ENCODE measurements at regions of chr12 and their contacts with region 1.

Region 1: GRCh38 chr12:14995583-14996425 is 23.0 kb downstream of the PDE6H start:
- DNase-seq: no peak
- H3K4me3 Mint-ChIP-seq: no peak overlapping the region
- H3K27ac Mint-ChIP-seq: no peak overlapping the region
- H3K4me1 Mint-ChIP-seq: peaks cover 28% of the 10 kb centered on the region
- H3K27me3 Mint-ChIP-seq: peaks cover 27% of the 10 kb centered on the region

Region 2: DNA sequence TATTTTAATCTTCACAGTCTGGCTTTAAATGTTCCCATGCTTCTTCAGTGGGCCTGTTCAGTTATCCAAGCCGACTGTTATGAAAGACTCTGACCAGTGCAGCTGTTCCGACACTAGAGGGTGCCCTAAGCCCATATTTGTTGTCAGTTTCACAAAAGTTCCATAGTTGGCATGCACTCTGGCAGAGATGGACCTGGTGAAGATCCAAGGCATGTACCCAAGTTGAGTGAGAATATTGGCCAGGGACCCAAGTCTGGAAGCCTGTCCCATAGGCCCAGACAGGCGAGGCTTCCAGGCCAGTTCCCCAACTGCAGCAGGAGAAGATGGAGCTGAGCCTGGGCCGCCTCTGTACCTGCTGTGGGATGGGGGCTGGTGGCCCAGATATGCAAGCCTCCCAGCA is 272.0 kb before region 1 on chr12:
- intact Hi-C with region 1: loop called (anchors 1 kb)
- DNase-seq: peak; percentile 31
- H3K4me3 Mint-ChIP-seq: no peak overlapping the region
- H3K27ac Mint-ChIP-seq: no peak overlapping the region
- H3K4me1 Mint-ChIP-seq: no peaks in the 10 kb centered on the region
- H3K27me3 Mint-ChIP-seq: peaks cover 15% of the 10 kb centered on the region

Region 3: DNA sequence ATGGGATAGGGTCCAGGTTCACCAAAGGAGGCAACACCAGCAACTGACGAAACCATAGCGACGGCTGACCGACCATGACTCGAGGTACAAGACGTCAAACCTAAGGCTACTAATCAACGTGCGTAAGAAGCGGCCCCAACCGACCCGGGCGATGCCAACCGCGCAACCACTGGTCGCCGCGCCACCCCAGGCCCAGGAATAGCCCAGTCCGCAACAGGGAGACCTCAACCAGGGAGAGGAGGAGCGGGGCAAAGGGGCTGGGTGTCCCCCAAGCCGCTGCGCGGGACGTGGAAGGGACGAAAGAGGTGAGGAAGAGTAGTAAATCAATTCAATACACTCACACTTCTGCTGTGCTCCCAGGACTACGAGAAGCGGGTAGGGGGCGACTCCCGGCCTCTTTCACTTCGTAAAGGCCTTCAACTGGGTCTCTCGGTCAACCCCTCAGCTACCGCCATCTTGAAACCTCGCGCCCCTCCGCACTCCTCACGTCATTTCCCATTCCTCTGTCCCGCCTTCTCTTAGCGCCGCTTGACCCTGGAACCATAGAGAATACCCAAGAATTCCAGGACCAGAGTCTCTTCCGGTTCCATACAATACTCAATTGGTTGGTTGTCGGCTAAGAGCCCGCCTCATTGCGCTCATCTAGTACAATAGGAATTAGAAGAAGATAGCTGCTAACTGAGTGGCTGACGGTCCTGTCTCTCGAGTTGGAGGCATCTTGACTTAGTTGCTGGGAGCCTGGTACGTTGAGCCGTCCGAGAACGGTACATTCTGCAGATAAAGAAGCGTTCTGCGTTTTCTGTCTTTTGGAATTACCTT is 192.6 kb before region 1 on chr12 and contains the starts of genes C12orf60 and WBP11:
- intact Hi-C with region 1: loop called (anchors 1 kb)
- DNase-seq: peak; percentile 84
- H3K4me3 Mint-ChIP-seq: no peak within 1 kb of the TSS
- H3K27ac Mint-ChIP-seq: no peak within 1 kb of the TSS
- H3K4me1 Mint-ChIP-seq: peaks cover 22% of the 10 kb centered on the region
- H3K27me3 Mint-ChIP-seq: no peaks in the 10 kb centered on the region
- total RNA-seq, gene C12orf60: 2.1 and 2.2 TPM in 2 replicates
- total RNA-seq, gene WBP11: 128 and 142 TPM in 2 replicates

Region 4: GRCh38 chr12:14937689-14938088 is 58.1 kb before region 1 on chr12:
- intact Hi-C with region 1: loop called (anchors 1 kb)
- DNase-seq: no peak
- H3K4me3 Mint-ChIP-seq: no peak overlapping the region
- H3K27ac Mint-ChIP-seq: no peak overlapping the region
- H3K4me1 Mint-ChIP-seq: peaks cover 12% of the 10 kb centered on the region
- H3K27me3 Mint-ChIP-seq: no peaks in the 10 kb centered on the region

Region 5: DNA sequence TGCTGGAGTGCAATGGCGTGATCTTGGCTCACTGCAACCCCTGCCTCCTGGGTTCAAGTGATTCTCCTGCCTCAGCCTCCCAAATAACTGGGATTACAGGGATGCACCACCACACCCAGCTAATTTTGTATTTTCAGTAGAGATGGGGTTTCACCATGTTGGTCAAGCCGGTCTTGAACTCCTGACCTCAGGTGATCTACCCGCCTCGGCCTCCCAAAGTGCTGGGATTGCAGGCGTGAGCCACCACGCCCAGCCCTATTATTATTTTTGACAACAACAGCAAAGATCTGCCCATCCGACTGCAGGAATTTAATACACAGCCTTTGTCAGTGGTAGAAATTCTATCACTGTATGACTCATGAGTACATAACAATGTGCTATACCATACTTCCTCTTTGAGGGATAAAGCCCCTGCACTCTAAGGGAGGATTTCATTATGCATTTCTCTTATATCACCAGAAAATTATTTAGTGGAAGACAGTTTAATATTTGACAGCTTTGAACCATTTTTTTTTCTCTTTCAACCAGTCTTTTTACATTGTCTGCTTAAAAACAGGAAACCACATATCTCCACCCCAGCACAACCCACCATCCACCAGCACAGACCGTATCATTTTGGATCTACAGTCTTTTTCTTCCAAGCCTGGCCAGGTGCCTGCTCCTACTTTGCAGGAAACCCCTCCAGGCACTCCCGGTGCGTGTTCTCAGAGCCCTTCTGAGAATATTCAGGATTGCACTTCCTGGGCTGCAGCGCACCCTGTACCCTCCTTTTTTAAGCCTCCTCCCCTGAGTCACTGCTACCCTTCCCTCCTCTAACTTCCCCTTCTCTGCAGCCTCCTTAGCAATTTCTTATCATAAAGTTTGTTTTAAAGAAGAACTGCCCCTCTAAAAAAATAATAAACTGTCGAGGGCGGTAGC is 35.0 kb before region 1 on chr12:
- intact Hi-C with region 1: loop called (anchors 2 kb)
- DNase-seq: peak; percentile 34
- H3K4me3 Mint-ChIP-seq: peak overlapping the region; percentile 97
- H3K27ac Mint-ChIP-seq: peak overlapping the region; percentile 97
- H3K4me1 Mint-ChIP-seq: peaks cover 68% of the 10 kb centered on the region
- H3K27me3 Mint-ChIP-seq: no peaks in the 10 kb centered on the region

Region 6: GRCh38 chr12:15220994-15221885 is 225.4 kb after region 1 on chr12 and contains the start of gene RERG:
- intact Hi-C with region 1: loop called (anchors 1 kb)
- DNase-seq: peak; percentile 65
- H3K4me3 Mint-ChIP-seq: peak within 1 kb of the TSS; percentile 43
- H3K27ac Mint-ChIP-seq: no peak within 1 kb of the TSS
- H3K4me1 Mint-ChIP-seq: no peaks in the 10 kb centered on the region
- H3K27me3 Mint-ChIP-seq: peaks cover 32% of the 10 kb centered on the region
- total RNA-seq, gene RERG: not detected in 2 replicates